Endothelial cell of umbilical vein (primary cell): ENCODE measurements at regions of chr5 and their contacts with region 1.

Region 1: GRCh38 chr5:132556763-132557477 is at the start of gene RAD50:
- DNase-seq: peak; percentile 83
- H3K4me3 ChIP-seq: peak within 1 kb of the TSS; percentile 63 to 90 (median 64)
- H3K27ac ChIP-seq: peak within 1 kb of the TSS; percentile 69
- H3K4me1 ChIP-seq: peaks cover 15% of the 10 kb centered on the region
- H3K27me3 ChIP-seq: no peaks in the 10 kb centered on the region
- CTCF ChIP-seq: no peak
- POLR2A ChIP-seq: peak; percentile 88
- total RNA-seq, gene RAD50: 18.7 and 20.4 TPM in 2 replicates

Region 2: GRCh38 chr5:132684491-132684890 is 127.6 kb after region 1 on chr5:
- CTCF ChIA-PET with region 1: no interaction called
- POLR2A ChIA-PET with region 1: interaction called, 10 read pairs
- dilution Hi-C with region 1: no loop called
- intact Hi-C with region 1: no loop called
- DNase-seq: no peak
- H3K4me3 ChIP-seq: no peak overlapping the region
- H3K27ac ChIP-seq: no peak overlapping the region
- H3K4me1 ChIP-seq: no peaks in the 10 kb centered on the region
- H3K27me3 ChIP-seq: no peaks in the 10 kb centered on the region
- CTCF ChIP-seq: no peak
- POLR2A ChIP-seq: no peak